ENCODE measurements at regions of chr22 and their contacts with region 1.

Region 1: DNA sequence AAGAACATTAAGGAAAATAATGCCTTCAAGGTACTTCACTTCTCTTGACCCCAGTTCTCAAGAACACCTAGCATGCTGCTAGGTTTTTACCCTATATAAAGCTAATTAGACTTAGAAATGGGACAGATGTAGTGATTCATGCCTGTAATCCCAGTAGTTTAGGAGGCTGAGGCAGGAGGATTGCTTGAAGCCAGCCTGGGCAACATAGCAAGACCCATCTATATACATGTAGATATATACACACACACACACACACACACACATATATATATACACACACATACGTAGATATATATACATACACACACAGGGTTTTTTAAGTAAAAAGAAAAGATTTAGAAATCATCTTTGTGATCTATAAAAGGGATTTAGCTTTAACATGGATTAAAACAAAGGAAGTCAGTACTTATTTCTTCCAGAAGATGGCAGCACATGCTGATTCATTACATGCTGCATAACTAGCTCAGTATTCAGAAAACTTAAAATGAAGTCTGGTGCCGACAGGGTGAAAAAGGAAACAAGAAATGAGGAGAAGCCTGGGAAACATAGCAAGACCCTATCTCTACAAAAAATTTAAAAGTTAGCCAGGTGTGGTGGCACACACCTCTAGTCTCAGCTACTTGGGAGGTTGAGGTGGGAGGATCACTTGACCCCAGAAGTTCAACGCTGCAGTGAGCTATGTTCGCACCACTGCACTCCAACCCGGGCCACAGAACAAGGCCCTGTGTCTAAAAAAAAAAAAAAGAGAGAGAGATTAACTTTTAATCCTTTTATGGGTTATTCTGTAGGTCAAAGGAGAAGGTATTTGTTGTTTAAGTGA is 28.5 kb upstream of the RBX1 start:
- DNase-seq: peak in 1 of 2 donors; percentile 32
- ATAC-seq: peak in 7 of 8 donors; percentile 41 to 84 (median 70)
- H3K4me3 ChIP-seq: peak overlapping the region in 1 of 10 donors; percentile 11
- H3K27ac ChIP-seq: no peak overlapping the region
- H3K4me1 ChIP-seq: peaks cover 0 to 6% (median 0%) of the 10 kb centered on the region in 9 donors
- H3K27me3 ChIP-seq: no peaks in the 10 kb centered on the region
- CTCF ChIP-seq: peak; percentile 63 to 85 (median 79)

Region 2: DNA sequence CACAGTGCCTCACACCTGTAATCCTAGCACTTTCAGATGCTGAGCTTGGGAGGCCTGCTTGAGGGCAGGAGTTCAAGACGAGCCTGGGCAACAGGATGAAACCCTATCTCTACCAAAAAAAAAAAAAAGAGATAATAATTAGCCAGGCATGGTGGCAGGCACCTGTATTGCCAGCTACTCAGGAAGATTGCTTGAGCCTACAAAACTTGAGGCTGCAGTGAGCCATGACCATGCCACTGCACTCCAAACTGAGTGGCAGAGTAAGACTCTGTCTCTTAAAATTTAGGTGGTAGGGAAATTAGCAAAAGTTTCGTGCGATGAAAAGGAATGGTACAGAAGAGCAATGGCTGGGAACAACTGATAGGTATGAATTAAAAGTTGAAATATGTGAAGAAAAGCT is 84.2 kb before region 1 on chr22:
- intact Hi-C with region 1: no loop called
- DNase-seq: no peak
- ATAC-seq: no peak
- H3K4me3 ChIP-seq: no peak overlapping the region
- H3K27ac ChIP-seq: no peak overlapping the region
- H3K4me1 ChIP-seq: no peaks in the 10 kb centered on the region
- H3K27me3 ChIP-seq: no peaks in the 10 kb centered on the region
- CTCF ChIP-seq: no peak

Region 3: DNA sequence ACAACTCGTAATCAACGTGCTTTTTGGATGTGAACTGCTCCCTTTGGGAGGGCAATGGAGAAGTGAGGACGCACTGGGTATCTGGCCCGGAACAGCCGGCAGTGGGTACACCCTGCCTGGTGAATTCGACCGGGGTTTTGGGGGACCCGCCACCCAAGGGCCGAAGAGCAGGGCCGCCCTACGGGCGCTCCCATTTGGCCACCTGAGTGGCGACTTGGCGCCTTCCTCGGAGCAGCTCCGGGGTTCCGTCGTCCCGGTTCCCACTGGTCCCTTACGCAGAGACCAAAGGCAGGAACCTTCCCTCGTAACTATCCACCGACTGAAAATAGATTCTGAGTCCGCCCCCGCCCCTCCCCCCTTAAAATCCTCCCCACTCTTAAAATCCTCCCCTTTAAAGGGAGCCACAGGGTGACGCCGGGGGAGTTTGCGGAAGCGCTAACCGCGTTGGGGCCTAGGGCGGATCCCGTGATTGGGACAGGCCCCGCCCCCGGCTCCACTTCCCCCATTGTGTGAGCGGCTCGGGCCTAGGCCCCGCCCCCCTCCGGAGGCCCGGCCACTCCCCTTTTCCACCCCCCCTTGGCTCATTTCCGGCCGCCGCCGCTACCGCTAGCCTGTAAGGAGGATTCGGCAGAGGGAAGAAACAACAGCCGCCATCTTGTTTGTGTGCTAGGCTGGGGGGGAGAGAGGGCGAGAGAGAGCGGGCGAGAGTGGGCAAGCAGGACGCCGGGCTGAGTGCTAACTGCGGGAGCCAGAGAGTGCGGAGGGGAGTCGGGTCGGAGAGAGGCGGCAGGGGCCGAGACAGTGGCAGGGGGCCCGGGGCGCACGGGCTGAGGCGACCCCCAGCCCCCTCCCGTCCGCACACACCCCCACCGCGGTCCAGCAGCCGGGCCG is 168.7 kb after region 1 on chr22:
- intact Hi-C with region 1: loop called in 2 of 10 experiments (anchors 10 kb)
- DNase-seq: peak; percentile 99 to 100
- ATAC-seq: peak; percentile 96 to 99 (median 98)
- H3K4me3 ChIP-seq: peak overlapping the region; percentile 73 to 100 (median 98)
- H3K27ac ChIP-seq: peak overlapping the region; percentile 100
- H3K4me1 ChIP-seq: peaks cover 0 to 38% (median 30%) of the 10 kb centered on the region in 9 donors
- H3K27me3 ChIP-seq: no peaks in the 10 kb centered on the region
- CTCF ChIP-seq: no peak

Region 4: DNA sequence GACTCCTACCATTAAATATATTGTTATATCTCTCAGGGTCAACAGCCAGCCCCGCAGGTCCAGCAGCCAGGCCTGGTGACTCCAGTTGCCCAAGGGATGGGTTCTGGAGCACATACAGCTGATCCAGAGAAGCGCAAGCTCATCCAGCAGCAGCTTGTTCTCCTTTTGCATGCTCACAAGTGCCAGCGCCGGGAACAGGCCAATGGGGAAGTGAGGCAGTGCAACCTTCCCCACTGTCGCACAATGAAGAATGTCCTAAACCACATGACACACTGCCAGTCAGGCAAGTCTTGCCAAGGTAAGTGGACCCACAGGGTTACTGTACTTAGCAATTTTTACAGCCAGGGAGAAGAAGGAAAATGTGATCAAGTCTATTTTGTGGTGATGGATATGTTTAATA is 204.8 kb after region 1 on chr22:
- intact Hi-C with region 1: loop called in 1 of 10 experiments (anchors 10 kb)
- DNase-seq: no peak
- ATAC-seq: peak in 1 of 8 donors; percentile 44
- H3K4me3 ChIP-seq: no peak overlapping the region
- H3K27ac ChIP-seq: no peak overlapping the region
- H3K4me1 ChIP-seq: peaks cover 0 to 15% (median 0%) of the 10 kb centered on the region in 9 donors
- H3K27me3 ChIP-seq: no peaks in the 10 kb centered on the region
- CTCF ChIP-seq: no peak

Region 5: GRCh38 chr22:41146573-41146972 is 223.9 kb after region 1 on chr22:
- intact Hi-C with region 1: loop called in 6 of 10 experiments (anchors 5 to 10 kb)
- DNase-seq: no peak
- ATAC-seq: no peak
- H3K4me3 ChIP-seq: no peak overlapping the region
- H3K27ac ChIP-seq: no peak overlapping the region
- H3K4me1 ChIP-seq: no peaks in the 10 kb centered on the region
- H3K27me3 ChIP-seq: no peaks in the 10 kb centered on the region
- CTCF ChIP-seq: no peak

Region 6: GRCh38 chr22:41256254-41256897 is 333.7 kb after region 1 on chr22:
- intact Hi-C with region 1: no loop called
- DNase-seq: no peak
- ATAC-seq: no peak
- H3K4me3 ChIP-seq: no peak overlapping the region
- H3K27ac ChIP-seq: no peak overlapping the region
- H3K4me1 ChIP-seq: peaks cover 0 to 25% (median 10%) of the 10 kb centered on the region in 9 donors
- H3K27me3 ChIP-seq: no peaks in the 10 kb centered on the region
- CTCF ChIP-seq: no peak

Region 7: DNA sequence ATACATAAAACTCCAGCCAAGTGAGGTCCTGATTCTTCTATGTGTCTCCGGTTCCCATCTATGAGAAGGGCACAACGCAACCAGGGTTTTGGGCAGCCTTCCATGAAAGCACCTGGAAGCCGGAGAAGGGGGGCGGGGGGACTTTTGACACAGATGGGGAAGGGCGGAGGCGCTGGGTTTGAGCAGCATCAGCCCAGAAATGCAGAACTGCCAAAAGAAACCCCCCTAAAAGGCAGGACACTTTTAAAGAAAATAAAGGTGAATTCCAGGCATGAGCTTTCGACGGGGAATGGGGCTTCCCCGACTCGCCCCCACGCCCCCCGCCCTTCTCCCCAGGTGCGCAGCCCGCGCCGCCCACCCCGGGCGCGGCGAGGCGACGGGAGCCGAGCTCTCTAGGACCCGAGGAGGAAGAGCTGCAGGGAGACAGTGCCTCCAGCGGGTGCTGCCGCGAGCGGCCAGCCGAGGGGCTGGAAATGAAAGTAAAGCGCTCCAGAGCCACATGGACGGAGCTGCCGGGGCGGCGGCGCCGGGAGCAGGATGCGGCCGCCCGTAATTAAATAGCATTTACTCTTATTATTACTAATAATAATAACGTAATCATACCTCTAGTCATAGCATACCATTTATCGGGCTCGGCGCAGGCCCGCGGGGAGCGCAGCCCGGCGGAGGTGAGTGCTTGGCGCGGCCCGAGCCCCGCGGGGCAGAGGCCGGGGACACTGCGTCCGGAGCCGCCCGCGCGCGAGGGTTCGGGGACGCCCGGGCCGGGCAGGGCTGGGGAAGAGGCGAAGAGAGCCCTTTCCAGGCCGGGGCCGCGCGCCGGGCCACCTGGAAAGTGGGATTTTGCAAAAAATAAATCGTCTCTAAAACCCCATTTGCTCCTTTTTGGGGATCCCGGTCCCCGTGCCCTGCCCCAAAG is 378.7 kb after region 1 on chr22 and contains the start of gene ZC3H7B:
- intact Hi-C with region 1: loop called in 1 of 10 experiments (anchors 10 kb)
- DNase-seq: peak; percentile 78 to 82
- ATAC-seq: peak; percentile 93 to 98 (median 97)
- H3K4me3 ChIP-seq: peak within 1 kb of the TSS; percentile 77 to 100 (median 86)
- H3K27ac ChIP-seq: peak within 1 kb of the TSS; percentile 46 to 96 (median 88)
- H3K4me1 ChIP-seq: peaks cover 0 to 31% (median 20%) of the 10 kb centered on the region in 9 donors
- H3K27me3 ChIP-seq: no peaks in the 10 kb centered on the region
- CTCF ChIP-seq: peak; percentile 38 to 82 (median 65)
- total RNA-seq, gene ZC3H7B: 31.7 to 51.5 (median 36.7) TPM

Measured in heart right ventricle (tissue), 16 donors.